ENCODE measurements at regions of chr14 and their contacts with region 1.

Region 1: GRCh38 chr14:91038438-91038837 is 22.0 kb downstream of the RPS6KA5 start:
- DNase-seq: no peak
- H3K4me3 Mint-ChIP-seq: no peak overlapping the region
- H3K27ac Mint-ChIP-seq: no peak overlapping the region
- H3K4me1 Mint-ChIP-seq: peaks cover 73% of the 10 kb centered on the region
- H3K27me3 Mint-ChIP-seq: no peaks in the 10 kb centered on the region

Region 2: GRCh38 chr14:91021991-91022621 is 16.3 kb before region 1 on chr14:
- intact Hi-C with region 1: loop called (anchors 1 kb)
- DNase-seq: no peak
- H3K4me3 Mint-ChIP-seq: peak overlapping the region; percentile 76
- H3K27ac Mint-ChIP-seq: peak overlapping the region; percentile 94
- H3K4me1 Mint-ChIP-seq: peaks cover 83% of the 10 kb centered on the region
- H3K27me3 Mint-ChIP-seq: no peaks in the 10 kb centered on the region